ENCODE measurements at regions of chr10 and their contacts with region 1.

Region 1: DNA sequence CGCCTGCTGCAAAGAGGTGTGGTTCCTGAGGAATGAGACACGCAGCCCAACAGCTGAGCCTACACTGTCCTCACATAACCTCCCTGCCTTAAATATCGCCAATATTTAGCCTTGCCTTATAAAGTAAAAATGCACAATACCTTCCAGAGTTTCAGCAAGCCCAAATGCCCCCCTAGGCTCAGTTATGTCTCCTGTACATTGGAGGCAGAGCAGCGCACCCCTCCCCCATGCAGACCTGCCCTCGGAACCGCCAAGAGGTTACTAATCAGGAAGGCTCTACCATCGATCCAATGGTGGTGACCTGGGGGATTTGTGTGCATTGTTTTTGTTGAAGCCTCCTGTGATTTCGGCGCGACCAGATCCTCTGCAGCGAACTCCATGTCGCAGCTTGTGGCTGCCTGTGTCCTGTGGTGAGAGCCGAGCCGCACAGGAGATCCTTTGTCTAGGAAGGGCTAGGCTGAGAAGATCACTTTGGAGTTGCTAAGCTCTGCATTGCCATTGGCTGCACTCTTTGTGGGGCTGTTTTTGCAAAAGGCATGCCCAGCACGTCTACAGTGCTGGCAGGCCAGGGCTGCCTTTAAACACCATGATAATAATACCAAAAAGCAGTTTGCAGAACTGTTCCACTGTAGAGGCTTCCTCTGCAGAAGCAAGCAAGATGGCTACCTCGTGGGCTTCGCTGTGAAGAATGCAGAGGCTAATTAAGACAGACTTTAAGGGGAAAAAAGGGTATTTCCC is 40.1 kb downstream of the TET1 start:
- DNase-seq: peak; percentile 48
- ATAC-seq: peak; percentile 92
- H3K4me3 ChIP-seq: peak overlapping the region; percentile 70
- H3K27ac ChIP-seq: peak overlapping the region; percentile 67
- H3K4me1 ChIP-seq: peaks cover 8% of the 10 kb centered on the region
- H3K27me3 ChIP-seq: no peaks in the 10 kb centered on the region
- CTCF ChIP-seq: no peak
- EP300 ChIP-seq: no peak
- POLR2A ChIP-seq: peak; percentile 73
- RAD21 ChIP-seq: no peak

Region 2: DNA sequence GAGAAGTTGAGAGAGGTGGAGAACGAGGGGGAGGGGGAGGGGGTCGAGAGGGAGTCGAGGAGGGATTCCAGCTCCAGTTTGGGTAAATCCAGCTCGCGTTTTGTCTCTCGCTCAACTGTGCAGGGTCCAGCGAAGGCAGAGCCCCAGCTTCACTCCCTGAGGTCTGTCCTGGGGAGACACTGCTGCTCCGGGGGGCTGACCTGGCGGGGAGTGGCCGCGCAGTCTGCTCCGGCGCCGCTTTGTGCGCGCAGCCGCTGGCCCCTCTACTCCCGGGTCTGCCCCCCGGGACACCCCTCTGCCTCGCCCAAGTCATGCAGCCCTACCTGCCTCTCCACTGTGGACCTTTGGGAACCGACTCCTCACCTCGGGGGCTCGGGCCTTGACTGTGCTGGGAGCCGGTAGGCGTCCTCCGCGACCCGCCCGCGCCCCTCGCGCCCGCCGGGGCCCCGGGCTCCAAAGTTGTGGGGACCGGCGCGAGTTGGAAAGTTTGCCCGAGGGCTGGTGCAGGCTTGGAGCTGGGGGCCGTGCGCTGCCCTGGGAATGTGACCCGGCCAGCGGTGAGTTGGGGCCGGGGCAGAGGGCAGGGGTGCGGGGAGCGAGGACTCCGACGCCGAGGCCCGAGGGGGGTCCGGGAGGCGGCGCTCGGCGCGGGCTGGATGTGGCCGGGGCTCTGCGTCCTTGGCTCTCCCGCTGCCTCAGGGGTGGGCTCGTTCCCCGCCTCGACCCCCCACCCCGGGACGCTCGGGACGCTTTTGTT is 39.8 kb before region 1 on chr10 and contains the start of gene TET1:
- CTCF ChIA-PET with region 1: no interaction called
- POLR2A ChIA-PET with region 1: interaction called, 3 read pairs
- RAD21 ChIA-PET with region 1: no interaction called
- SMC1A ChIA-PET with region 1: no interaction called
- in situ Hi-C with region 1: no loop called
- intact Hi-C with region 1: loop called (anchors 1 kb)
- DNase-seq: no peak
- ATAC-seq: peak; percentile 68
- H3K4me3 ChIP-seq: peak within 1 kb of the TSS; percentile 41; the same call in 1 of the 2 replicates
- H3K27ac ChIP-seq: no peak within 1 kb of the TSS
- H3K4me1 ChIP-seq: no peaks in the 10 kb centered on the region
- H3K27me3 ChIP-seq: peaks cover 6 to 10% of the 10 kb centered on the region in 2 experiments
- CTCF ChIP-seq: no peak
- EP300 ChIP-seq: no peak
- POLR2A ChIP-seq: no peak
- RAD21 ChIP-seq: no peak
- polyA plus RNA-seq, gene TET1: 0.22 to 0.31 TPM

Measured in GM12878 (cell line).